Activated naive CD4-positive, alpha-beta T cell treated with anti-CD3 and anti-CD28 coated beads for 36 hours (primary cell): ENCODE measurements at regions of chr12 and their contacts with region 1.

Region 1: GRCh38 chr12:107328442-107329133 is 235.2 kb upstream of the CRY1 start:
- DNase-seq: peak; percentile 39
- H3K4me3 Mint-ChIP-seq: no peak overlapping the region
- H3K27ac Mint-ChIP-seq: no peak overlapping the region
- H3K4me1 Mint-ChIP-seq: peaks cover 66% of the 10 kb centered on the region
- H3K27me3 Mint-ChIP-seq: no peaks in the 10 kb centered on the region

Region 2: GRCh38 chr12:107393043-107393717 is 64.6 kb after region 1 on chr12:
- CTCF ChIA-PET with region 1: interaction called, 4 read pairs
- intact Hi-C with region 1: loop called (anchors 2 kb)
- DNase-seq: peak; percentile 61
- H3K4me3 Mint-ChIP-seq: no peak overlapping the region
- H3K27ac Mint-ChIP-seq: no peak overlapping the region
- H3K4me1 Mint-ChIP-seq: peaks cover 67% of the 10 kb centered on the region
- H3K27me3 Mint-ChIP-seq: no peaks in the 10 kb centered on the region